Motor neuron (in vitro differentiated cells): ENCODE measurements at regions of chr5 and their contacts with region 1.

Region 1: DNA sequence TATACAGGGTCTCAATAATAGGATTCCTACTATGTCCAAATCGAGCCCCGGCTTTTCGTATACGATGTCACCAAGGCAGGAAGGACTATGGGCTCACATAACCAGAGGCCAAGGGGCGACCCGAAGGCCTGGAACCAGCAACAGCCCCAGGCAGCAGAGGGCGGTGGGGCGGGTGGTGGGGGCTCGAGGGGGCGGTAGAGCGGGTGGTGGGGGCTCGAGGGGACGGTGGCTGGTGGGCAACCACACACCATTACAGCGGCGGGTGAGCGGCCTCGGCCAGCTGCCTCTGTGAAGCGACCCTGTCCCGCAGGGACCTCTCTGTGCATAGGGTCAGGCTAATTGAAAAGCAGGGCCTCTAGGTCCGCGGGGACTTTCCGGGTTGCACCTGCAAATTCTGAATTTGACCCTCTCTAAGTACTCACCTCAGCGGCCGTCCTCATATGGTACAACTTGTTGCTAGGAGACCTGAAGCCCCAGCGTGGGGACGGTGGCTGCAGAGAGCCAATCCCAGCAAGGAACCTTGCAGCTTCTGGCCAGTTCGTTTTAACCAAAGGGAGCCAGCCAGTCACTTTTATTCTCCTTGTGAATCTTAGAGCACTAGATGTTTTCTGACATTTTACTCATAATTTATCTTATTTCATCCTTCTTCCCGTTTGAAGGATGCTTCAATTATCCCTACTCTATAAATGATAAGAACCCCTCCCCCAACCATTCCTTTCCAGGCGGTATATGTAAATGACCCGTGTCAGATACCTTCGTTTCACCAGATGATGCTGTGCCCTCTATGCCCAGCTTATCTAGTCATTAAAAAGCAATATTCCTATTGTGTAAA is at the start of gene NME5:
- ATAC-seq: peak in 7 of 8 experiments; percentile 87 to 99 (median 99)
- H3K4me3 ChIP-seq: peak within 1 kb of the TSS; percentile 49 to 67 (median 65)
- H3K27ac ChIP-seq: no peak within 1 kb of the TSS
- H3K4me1 ChIP-seq: peaks cover 0 to 7% of the 10 kb centered on the region in 2 donors
- total RNA-seq, gene NME5: 1.7 to 26.2 (median 5.1) TPM in 7 of 8 experiments, not detected in the other

Region 2: DNA sequence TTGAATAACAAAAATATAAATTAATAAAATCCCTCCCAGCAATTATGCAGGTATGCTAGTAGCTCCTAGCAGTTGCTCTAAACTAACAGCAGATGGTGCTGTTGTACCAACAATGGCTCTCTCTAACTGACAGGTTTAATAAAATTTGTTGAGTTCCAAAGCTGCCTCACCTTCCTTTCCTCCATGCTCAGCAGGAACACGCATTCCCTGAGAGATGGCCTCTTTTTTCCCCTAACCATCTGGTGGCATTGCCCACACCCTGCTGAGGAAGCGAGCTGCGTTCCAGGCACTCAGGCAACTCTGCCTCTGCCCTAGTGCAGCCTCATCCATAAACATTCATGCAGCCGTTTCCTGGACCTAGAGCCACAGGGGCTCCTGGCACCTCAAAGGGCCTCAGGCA is 509.5 kb before region 1 on chr5:
- in situ Hi-C with region 1: loop called in 1 of 9 experiments (anchors 25 kb)
- ATAC-seq: peak; percentile 84 to 96 (median 90)
- H3K4me3 ChIP-seq: no peak overlapping the region
- H3K27ac ChIP-seq: no peak overlapping the region
- H3K4me1 ChIP-seq: no peaks in the 10 kb centered on the region

Region 3: DNA sequence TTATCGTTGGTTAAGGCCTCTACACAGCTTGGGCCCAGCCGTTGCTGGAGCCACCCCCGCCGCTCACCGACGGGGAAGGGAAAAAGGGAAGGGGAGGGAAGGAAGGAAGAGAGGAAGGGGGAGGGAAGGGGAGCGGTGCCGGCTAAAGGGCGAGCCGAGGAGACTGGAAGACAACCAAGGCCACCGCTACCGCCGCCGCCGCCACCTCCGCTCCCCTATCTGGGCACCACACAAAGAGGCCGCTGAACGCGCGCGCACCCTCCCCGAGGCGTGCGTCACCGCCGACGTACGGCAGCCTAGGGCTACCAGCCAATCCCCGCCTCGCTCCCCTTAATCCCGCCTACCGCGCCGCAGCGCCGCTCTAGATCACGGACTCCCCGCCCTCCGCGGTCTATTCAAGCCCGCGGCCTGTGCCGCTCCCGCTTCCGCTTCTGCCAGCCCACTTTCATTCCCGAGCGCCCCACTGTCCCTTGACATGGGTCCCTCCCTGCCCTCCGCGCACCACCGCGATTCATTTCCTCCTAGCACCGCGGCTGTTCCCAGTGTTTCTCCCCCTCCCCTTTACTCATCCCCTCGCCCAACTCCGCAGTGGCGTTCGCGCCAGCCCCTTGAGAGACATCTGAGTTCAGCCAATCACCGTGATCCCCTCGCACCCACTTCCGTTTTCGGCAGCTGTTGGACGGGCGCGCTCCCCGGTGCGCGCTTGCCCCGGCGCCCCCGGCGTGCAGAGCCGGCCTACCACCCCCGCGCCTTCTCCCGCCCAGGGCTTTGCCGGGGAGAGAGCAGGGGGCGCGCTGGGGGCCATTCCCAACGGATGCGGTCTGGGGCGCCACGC is 384.8 kb before region 1 on chr5 and contains the start of gene HNRNPA0:
- in situ Hi-C with region 1: loop called in 2 of 9 experiments (anchors 25 kb)
- ATAC-seq: peak; percentile 84 to 94 (median 92)
- H3K4me3 ChIP-seq: peak within 1 kb of the TSS; percentile 60 to 92 (median 80)
- H3K27ac ChIP-seq: peak within 1 kb of the TSS; percentile 99
- H3K4me1 ChIP-seq: peaks cover 7 to 16% of the 10 kb centered on the region in 2 donors
- total RNA-seq, gene HNRNPA0: 10.7 to 63.9 (median 26.1) TPM

Region 4: DNA sequence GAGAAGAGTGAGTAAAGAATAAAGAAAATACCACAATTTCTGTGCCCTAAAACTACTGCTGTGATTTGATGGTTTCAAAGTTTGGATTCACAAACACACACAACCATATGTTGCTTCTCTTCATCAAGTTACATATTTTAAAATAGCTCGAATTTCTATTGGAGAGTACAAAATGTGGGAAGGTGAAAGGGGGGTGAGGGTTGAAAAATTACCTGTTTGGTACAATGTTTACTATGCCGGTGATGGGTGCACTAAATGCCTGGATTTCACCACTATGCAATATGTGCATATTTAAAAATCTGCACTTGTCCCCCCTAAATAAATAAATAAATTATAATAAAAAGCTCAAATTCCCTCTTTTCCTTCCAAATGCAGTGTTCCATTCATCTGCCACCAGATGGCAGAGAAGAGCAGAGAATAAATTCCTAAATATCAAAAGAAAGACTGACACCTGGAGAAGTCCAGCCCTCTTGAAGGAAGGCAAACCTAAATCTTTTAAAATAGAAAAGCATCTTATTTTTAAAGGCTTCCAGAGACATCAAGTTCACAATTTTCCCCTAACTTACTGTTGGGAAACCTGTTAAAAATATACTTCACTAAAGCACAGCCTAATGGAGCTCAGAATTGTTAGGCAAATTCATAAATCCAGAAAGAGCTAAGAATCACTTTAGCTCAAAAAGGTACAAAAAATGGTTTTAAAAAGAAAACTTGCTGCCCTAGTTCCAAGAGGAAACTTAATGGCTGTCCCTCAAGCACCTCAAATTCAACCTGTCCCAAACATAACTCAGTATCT is 360.2 kb before region 1 on chr5:
- in situ Hi-C with region 1: loop called in 5 of 9 experiments (anchors 25 kb)
- ATAC-seq: peak in 1 of 8 experiments; percentile 29
- H3K4me3 ChIP-seq: no peak overlapping the region
- H3K27ac ChIP-seq: no peak overlapping the region
- H3K4me1 ChIP-seq: peaks cover 0 to 13% of the 10 kb centered on the region in 2 donors

Region 5: DNA sequence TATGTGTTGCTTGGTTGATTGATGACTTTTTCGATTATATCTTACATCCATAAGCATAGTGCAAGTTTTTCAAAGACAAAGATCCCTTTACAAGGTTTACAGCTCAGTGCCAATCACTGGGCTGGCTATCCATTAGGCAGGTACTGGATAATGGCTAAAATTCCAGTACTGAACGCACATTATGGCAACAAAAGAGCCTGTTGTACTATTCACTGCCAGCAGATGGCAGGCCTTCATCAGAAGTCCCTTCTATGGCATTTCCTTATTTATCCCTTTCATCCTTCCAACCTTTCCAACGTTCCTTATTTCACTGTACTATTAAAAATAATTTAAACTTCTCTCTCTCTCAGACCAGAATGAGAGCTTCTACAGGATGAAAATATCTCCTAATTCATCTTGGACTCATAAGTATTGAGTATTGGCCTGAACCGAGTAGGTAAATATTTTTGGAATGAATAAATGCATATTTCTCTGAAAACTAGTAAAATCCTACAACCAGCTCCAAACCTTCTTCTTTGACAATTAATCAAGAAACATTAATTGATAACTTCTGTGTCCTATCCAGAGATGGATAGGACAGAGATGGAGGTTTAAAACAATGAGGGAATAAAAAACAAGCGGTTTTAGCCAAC is 62.0 kb before region 1 on chr5:
- in situ Hi-C with region 1: loop called in 1 of 9 experiments (anchors 10 kb)
- ATAC-seq: peak in 7 of 8 experiments; percentile 31 to 68 (median 57)
- H3K4me3 ChIP-seq: no peak overlapping the region
- H3K27ac ChIP-seq: no peak overlapping the region
- H3K4me1 ChIP-seq: no peaks in the 10 kb centered on the region

Region 6: DNA sequence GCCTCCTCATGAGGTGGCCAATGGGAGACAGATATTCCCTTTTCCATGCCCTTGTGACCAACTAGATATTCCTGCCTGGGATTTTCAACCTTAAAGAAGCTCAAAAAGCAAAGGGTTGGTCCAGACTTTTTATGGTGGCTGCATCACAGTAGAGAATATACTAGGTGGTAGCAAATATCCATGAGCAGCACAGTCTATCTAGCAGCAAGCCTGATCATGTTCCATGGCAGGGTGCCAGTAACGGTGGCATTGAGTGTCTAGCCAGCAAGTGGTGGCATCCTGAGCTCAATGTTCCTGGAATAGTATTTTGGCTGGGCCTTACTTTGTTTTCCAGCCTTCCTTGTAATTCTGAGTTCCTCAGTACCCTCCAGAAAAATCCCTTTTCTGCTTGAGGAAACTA is 166.6 kb after region 1 on chr5:
- in situ Hi-C with region 1: no loop called
- ATAC-seq: no peak
- H3K4me3 ChIP-seq: no peak overlapping the region
- H3K27ac ChIP-seq: no peak overlapping the region
- H3K4me1 ChIP-seq: no peaks in the 10 kb centered on the region